SK-N-SH (cell line): ENCODE measurements at regions of chr14 and their contacts with region 1.

Region 1: DNA sequence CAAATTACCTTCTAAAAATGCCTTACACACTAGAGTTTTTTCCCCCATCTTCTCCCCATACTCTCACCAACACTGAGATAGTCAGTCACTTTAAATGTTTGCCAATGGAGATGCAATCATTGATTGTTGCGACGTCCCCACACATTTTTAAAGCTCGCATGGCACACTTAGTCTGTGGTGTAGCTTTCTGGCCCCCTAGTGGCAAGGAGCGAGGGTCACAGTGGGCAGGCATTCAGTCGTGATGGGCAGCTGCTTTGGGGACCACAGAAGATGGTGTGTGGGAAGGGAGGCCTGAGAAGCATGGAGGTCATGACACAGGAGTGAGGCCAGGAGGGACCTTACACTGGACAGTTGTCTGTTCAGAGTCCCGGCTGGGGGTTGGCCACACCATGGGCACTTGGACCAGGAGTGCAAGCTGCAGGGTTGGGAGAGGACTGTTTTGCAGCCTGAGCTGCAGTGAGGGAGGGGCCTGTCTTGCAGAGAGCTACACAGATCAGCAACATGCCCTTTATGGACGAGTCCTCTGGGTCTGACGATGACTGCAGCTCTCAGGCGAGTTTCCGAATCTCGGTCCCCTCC is 28.7 kb downstream of the PIGH start:
- DNase-seq: peak; percentile 85
- H3K4me3 ChIP-seq: no peak overlapping the region; a peak in 1 of 4 replicates
- H3K27ac ChIP-seq: no peak overlapping the region
- H3K4me1 ChIP-seq: no peaks in the 10 kb centered on the region; a peak in 1 of 4 replicates
- H3K27me3 ChIP-seq: no peaks in the 10 kb centered on the region
- CTCF ChIP-seq: peak; percentile 92
- EP300 ChIP-seq: no peak
- RAD21 ChIP-seq: peak; percentile 87

Region 2: DNA sequence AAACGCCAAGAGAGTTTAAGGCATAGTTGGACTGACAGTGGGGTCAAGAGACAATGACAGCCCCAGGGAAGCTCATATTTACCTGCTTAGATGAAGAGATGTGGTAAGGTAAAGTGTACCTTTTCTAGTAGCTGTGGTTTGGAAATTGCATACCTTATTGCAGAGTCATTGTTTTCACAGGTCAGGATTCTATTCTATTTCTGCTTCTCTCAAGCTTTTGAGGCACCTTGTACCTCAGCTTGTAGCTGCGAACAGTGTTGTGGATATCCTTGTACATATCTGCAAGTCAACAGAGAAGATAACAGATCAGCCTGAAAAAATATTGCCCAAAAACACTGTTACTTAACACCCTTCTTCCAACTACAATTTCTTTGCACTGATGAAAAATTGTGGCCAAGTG is 259.5 kb before region 1 on chr14:
- CTCF ChIA-PET with region 1: no interaction called
- POLR2A ChIA-PET with region 1: no interaction called
- DNase-seq: no peak
- H3K4me3 ChIP-seq: no peak overlapping the region
- H3K27ac ChIP-seq: no peak overlapping the region
- H3K4me1 ChIP-seq: no peaks in the 10 kb centered on the region; a peak in 1 of 4 replicates
- H3K27me3 ChIP-seq: no peaks in the 10 kb centered on the region
- CTCF ChIP-seq: no peak
- EP300 ChIP-seq: no peak
- RAD21 ChIP-seq: no peak

Region 3: DNA sequence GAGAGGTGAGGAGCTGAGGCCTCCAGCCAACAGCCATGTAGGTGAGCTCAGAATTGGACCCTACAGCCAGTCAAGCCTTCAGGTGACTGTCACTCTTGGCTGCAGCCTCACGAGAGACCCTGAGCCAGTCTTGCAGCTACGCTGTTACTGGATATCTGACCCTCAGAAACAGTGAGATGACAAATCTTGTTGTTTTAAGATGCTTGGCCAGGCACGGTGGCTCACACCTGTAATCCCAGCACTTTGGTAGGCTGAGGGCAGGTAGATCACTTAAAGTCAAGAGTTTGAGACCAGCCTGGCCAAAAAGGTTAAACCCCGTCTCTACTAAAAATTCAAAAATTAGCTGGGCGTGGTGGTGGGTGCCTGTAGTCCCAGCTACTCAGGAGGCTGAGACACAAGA is 165.6 kb before region 1 on chr14:
- CTCF ChIA-PET with region 1: interaction called, 14 read pairs
- POLR2A ChIA-PET with region 1: no interaction called
- DNase-seq: no peak
- H3K4me3 ChIP-seq: no peak overlapping the region
- H3K27ac ChIP-seq: no peak overlapping the region
- H3K4me1 ChIP-seq: no peaks in the 10 kb centered on the region
- H3K27me3 ChIP-seq: no peaks in the 10 kb centered on the region
- CTCF ChIP-seq: no peak
- EP300 ChIP-seq: no peak
- RAD21 ChIP-seq: no peak

Region 4: GRCh38 chr14:67435615-67436346 is 135.6 kb before region 1 on chr14:
- CTCF ChIA-PET with region 1: interaction called, 319 read pairs
- POLR2A ChIA-PET with region 1: no interaction called
- DNase-seq: no peak
- H3K4me3 ChIP-seq: no peak overlapping the region
- H3K27ac ChIP-seq: no peak overlapping the region
- H3K4me1 ChIP-seq: no peaks in the 10 kb centered on the region
- H3K27me3 ChIP-seq: peaks cover 6% of the 10 kb centered on the region
- CTCF ChIP-seq: no peak
- EP300 ChIP-seq: no peak
- RAD21 ChIP-seq: no peak

Region 5: DNA sequence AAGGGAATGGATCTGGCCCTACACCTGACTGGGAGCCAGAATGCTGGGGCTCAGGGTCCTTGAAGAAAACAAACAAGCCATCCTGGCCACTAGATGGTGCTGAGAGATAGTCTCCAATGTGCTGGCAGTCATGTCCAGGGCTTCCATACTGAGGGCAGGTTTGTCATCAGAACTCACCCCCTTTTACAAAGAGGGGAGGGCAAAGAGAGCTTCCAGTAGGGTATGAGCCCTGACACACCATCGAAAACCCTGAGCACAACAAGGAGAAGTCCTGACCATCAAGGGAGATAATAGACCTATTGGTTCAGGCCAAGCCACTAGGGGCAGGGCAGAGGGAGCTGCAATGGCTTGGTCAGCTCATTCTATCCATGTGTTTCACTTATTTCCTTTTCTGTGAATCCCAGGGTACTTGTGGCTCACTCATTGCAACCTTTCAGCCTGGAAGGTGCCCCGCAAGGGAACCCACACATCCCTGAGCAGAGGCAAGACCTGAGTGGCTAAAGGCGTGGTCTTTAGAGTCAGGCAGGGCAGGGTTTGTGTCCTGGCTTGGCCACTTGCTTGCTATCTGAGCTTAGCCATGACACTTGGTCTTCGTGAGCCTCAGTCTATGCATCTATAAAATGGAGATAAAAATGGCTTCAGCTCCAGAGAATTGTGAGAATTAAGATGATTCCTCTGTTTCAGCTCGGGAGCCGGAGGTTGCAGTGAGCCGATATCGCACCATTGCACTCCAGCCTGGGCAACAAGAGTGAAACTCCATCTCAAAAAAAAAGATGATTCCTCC is 44.5 kb before region 1 on chr14:
- CTCF ChIA-PET with region 1: interaction called, 237 read pairs
- POLR2A ChIA-PET with region 1: no interaction called
- DNase-seq: peak; percentile 65
- H3K4me3 ChIP-seq: peak overlapping the region in 1 of 2 experiments; percentile 34; a peak in 1 of 4 replicates
- H3K27ac ChIP-seq: no peak overlapping the region
- H3K4me1 ChIP-seq: no peaks in the 10 kb centered on the region; a peak in 1 of 4 replicates
- H3K27me3 ChIP-seq: peaks cover 18% of the 10 kb centered on the region; the same call in 1 of the 2 replicates
- CTCF ChIP-seq: peak; percentile 86
- EP300 ChIP-seq: no peak
- RAD21 ChIP-seq: peak; percentile 72

Region 6: GRCh38 chr14:67547282-67547681 is 24.1 kb before region 1 on chr14:
- CTCF ChIA-PET with region 1: interaction called, 21 read pairs
- POLR2A ChIA-PET with region 1: no interaction called
- DNase-seq: no peak
- H3K4me3 ChIP-seq: no peak overlapping the region
- H3K27ac ChIP-seq: no peak overlapping the region
- H3K4me1 ChIP-seq: no peaks in the 10 kb centered on the region
- H3K27me3 ChIP-seq: no peaks in the 10 kb centered on the region
- CTCF ChIP-seq: no peak
- EP300 ChIP-seq: no peak
- RAD21 ChIP-seq: no peak

Region 7: DNA sequence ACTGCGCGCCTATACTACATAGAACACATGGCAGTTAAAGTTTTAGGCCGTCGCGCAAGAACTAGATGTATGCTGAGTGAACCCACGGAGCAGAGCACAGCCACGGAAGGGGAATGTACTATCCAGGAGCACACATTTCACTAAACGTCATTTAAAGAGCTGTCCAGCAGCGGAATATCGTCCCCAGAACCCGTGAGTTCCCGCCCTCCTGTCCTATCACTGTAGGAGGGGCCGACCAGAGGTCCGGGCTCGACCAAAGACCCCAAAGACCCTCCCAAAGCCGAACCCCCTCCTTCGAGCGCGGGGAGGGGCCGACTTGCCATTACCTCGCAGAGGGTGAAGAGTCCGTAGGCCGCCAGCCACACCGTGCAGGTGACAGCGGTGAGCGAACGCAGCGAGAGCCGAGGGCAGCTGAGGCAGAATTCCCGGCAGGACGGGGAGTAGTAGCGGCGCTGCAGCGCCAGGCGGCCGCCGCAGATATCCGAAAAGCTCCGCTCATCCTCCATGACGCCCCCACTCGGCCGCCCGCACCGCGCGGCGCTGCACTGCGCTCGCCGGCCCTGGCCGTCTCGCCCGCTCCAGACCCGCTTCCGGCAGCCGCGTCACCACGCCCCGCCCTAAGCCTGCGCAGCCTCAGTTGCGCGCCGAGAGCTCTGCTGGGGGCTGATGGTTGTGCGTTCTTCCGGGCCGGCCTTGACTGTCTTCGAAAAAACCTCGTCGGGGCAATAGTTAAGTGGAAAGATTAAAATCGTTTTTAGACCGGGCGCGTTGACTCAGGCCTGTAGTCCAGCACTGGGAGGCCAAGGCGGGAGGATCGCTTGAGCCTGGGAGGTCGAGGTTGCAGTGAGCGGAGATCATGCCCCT is 28.6 kb after region 1 on chr14 and contains the start of gene PIGH:
- CTCF ChIA-PET with region 1: interaction called, 18 read pairs
- POLR2A ChIA-PET with region 1: no interaction called
- DNase-seq: peak; percentile 97
- H3K4me3 ChIP-seq: peak within 1 kb of the TSS; percentile 77 to 90
- H3K27ac ChIP-seq: peak within 1 kb of the TSS; percentile 65 to 66
- H3K4me1 ChIP-seq: peaks cover 0 to 6% of the 10 kb centered on the region in 2 experiments; a peak in 2 of 4 replicates
- H3K27me3 ChIP-seq: no peaks in the 10 kb centered on the region
- CTCF ChIP-seq: peak; percentile 58
- EP300 ChIP-seq: no peak
- RAD21 ChIP-seq: no peak; the same call in 1 of the 2 replicates
- polyA plus RNA-seq, gene PIGH: 23.6 and 26.5 TPM in 2 replicates